ENCODE measurements at regions of chr18 and their contacts with region 1.

Region 1: DNA sequence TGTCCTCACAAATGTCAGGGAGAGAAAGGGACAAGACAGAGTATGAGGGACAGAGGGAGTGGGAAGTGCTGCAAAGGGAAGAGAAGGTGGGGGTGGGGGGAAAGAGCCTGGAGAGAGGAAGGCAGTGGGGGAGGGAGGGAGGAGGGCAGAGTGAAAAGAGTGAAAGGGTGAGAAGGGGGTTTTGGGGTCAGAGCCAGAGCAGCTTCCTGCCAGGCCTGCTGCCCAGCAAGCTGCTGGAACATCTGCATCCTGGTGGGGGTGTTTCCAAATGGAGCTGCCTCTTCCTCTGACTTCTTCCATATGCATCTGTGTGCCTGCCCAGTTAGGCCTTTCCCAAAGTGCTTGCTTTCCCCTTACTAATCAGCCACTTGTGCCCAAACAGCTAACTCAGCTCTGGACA is 94.3 kb upstream of the CELF4 start:
- DNase-seq: peak in 1 of 5 donors; percentile 24
- ATAC-seq: peak in 1 of 4 donors; percentile 13
- H3K4me3 ChIP-seq: no peak overlapping the region
- H3K27ac ChIP-seq: no peak overlapping the region
- H3K4me1 ChIP-seq: peaks cover 0 to 3% (median 0%) of the 10 kb centered on the region in 12 donors
- H3K27me3 ChIP-seq: no peaks in the 10 kb centered on the region
- CTCF ChIP-seq: no peak
- POLR2A ChIP-seq: no peak

Region 2: DNA sequence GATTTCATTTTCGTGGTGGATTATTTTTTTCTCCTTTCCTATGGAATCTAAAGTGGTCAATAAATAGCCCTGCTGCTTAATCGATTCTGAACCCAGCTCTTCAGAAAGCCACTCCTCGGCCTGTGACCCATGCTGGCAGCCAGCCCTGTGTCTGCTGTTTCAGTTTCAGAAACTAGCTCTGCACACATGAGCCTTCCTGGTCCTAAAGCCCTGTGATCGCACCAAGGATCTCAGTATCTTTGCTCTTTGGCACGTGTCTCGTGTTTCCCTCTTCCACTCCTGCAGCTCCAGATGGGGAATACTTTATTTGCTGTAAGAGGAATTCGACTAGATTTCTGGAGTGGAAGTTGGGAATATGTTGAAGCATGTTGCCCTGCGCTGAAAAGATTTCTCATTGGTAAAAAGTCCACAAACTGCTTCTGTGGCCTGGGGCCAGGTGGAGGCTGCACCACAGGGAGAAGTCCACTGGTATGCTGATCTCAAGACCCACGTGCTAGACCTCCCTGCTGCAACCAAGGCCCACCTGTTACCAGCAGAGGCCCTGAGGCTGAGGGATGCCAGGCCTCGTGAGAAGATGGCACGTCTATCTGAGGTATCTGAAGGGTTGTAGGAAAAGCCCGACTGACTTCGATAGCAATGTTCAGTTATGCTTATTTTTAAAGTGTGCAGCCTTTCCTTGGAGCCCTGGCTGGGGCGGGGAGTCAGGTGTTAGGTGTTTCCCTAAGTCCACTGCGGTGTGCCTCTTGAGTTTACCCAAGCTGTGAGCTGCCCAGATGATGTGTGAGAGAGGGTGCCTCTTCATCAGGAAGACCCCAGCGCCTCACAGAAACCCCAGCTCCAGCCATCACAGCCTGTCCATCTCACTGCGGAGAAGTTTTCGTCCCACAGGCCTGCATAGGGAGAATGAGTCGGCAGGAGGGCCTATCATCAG is 60.7 kb before region 1 on chr18:
- intact Hi-C with region 1: loop called in 1 of 10 experiments (anchors 10 kb)
- DNase-seq: no peak
- ATAC-seq: no peak
- H3K4me3 ChIP-seq: no peak overlapping the region
- H3K27ac ChIP-seq: no peak overlapping the region
- H3K4me1 ChIP-seq: no peaks in the 10 kb centered on the region
- H3K27me3 ChIP-seq: no peaks in the 10 kb centered on the region
- CTCF ChIP-seq: no peak
- POLR2A ChIP-seq: no peak